ENCODE measurements at regions of chr6 and their contacts with region 1.

Region 1: DNA sequence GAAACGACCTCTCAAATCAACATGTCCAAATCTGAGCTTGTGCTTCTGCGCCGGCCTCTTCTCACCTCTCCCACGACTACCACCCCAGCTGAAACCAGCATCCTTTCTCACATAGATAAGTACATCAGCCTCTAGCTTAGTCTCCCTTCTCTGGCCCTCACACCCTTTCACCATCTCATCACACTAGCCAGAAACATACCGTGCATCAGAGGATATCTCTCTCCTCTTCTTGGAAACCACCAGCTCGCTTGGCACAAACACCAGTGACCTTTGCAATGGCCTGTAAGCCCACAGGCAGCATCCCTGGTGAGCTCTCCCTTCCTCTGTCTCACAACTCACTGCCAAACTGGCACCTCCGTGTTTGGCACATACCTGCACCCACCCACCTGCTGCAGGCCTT is 291.8 kb downstream of the EYA4 start:
- H3K4me3 ChIP-seq: no peak overlapping the region
- H3K27ac ChIP-seq: no peak overlapping the region
- H3K4me1 ChIP-seq: no peaks in the 10 kb centered on the region
- CTCF ChIP-seq: no peak

Region 2: DNA sequence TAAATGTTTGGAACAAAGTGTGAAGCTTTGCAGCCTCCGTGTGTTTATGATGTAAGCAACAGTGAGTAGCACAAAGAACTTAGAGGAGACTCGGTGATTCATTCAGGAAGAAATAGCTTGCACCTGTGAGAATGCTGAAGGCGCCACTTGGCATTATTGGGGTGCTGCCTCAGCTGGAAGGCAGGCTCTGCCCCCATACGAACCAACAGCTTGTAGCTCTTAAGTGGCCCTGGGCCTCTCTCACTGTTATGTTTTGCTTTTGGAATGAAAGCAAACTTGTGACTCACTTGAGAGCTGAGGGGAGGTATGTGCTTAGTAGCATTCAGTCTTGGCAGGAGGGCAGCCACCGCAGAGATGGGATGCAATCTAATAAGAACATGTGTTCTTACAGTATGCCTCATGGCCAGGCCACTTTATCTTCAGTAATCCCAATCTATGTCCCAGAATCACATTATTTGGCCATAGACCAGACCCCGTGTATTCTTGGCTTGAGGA is 19.0 kb after region 1 on chr6:
- CTCF ChIA-PET with region 1: interaction called, 11 read pairs
- POLR2A ChIA-PET with region 1: no interaction called
- H3K4me3 ChIP-seq: no peak overlapping the region
- H3K27ac ChIP-seq: no peak overlapping the region
- H3K4me1 ChIP-seq: no peaks in the 10 kb centered on the region
- CTCF ChIP-seq: no peak